GM12878 (cell line): ENCODE measurements at regions of chr7 and their contacts with region 1.

Region 1: GRCh38 chr7:87926581-87927461 is 7.2 kb upstream of the ADAM22 start:
- DNase-seq: peak; percentile 95
- ATAC-seq: peak; percentile 90
- H3K4me3 ChIP-seq: peak overlapping the region; percentile 62
- H3K27ac ChIP-seq: peak overlapping the region; percentile 92
- H3K4me1 ChIP-seq: peaks cover 9% of the 10 kb centered on the region
- H3K27me3 ChIP-seq: no peaks in the 10 kb centered on the region
- CTCF ChIP-seq: peak; percentile 36 to 48 (median 40)
- EP300 ChIP-seq: peak in 1 of 2 experiments; percentile 91; a peak in 3 of 4 replicates
- POLR2A ChIP-seq: peak; percentile 69
- RAD21 ChIP-seq: peak; percentile 10; the same call in 1 of the 2 replicates

Region 2: GRCh38 chr7:87038993-87039716 is 887.7 kb before region 1 on chr7:
- CTCF ChIA-PET with region 1: no interaction called
- POLR2A ChIA-PET with region 1: no interaction called
- RAD21 ChIA-PET with region 1: no interaction called
- SMC1A ChIA-PET with region 1: no interaction called
- in situ Hi-C with region 1: no loop called
- intact Hi-C with region 1: no loop called
- DNase-seq: no peak
- ATAC-seq: no peak
- H3K4me3 ChIP-seq: no peak overlapping the region
- H3K27ac ChIP-seq: no peak overlapping the region
- H3K4me1 ChIP-seq: no peaks in the 10 kb centered on the region
- H3K27me3 ChIP-seq: no peaks in the 10 kb centered on the region
- CTCF ChIP-seq: no peak
- EP300 ChIP-seq: no peak
- POLR2A ChIP-seq: no peak
- RAD21 ChIP-seq: no peak

Region 3: GRCh38 chr7:87219545-87220025 is 707.2 kb before region 1 on chr7 and contains the start of gene TMEM243:
- CTCF ChIA-PET with region 1: no interaction called
- POLR2A ChIA-PET with region 1: no interaction called
- RAD21 ChIA-PET with region 1: no interaction called
- SMC1A ChIA-PET with region 1: no interaction called
- in situ Hi-C with region 1: no loop called
- intact Hi-C with region 1: loop called (anchors 2 kb)
- DNase-seq: peak; percentile 45
- ATAC-seq: peak; percentile 69
- H3K4me3 ChIP-seq: peak within 1 kb of the TSS; percentile 95
- H3K27ac ChIP-seq: peak within 1 kb of the TSS; percentile 98
- H3K4me1 ChIP-seq: peaks cover 8% of the 10 kb centered on the region
- H3K27me3 ChIP-seq: no peaks in the 10 kb centered on the region
- CTCF ChIP-seq: peak; percentile 28 to 42 (median 34); a peak in 5 of 6 replicates
- EP300 ChIP-seq: peak in 1 of 2 experiments; percentile 73; a peak in 2 of 4 replicates
- POLR2A ChIP-seq: peak; percentile 90
- RAD21 ChIP-seq: peak; percentile 29; the same call in 1 of the 2 replicates
- polyA plus RNA-seq, gene TMEM243: 47.8 to 70.9 TPM

Region 4: DNA sequence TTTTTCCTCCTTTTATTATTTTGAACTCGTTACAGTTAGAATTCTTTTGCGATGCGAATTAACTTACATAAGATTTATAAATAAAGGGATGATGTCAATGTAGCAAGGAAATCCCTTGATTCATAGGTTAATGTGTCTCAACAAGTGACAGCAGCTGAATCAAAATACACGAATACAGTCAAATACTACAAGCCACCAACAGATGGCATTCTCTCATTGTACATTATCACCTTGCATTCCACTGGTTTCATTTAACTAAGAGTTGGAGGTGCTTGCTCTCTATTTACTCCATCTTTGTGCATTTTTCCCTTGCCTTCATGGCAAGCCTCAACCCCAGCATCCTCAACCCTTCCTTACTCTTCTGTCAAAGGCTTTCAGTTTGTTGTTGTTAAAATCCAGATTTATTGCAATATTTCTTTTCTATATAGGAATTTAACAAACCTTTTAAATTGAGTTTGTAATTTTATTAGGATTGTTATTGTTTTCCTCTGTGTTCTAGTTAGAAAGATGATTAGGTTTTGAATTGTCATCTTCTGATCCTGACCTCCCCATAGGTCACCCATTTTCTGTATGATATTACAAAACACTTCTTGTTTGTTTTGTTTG is 128.9 kb before region 1 on chr7:
- CTCF ChIA-PET with region 1: interaction called, 7 read pairs
- POLR2A ChIA-PET with region 1: no interaction called
- RAD21 ChIA-PET with region 1: interaction called, 10 read pairs
- SMC1A ChIA-PET with region 1: interaction called, 6 read pairs
- in situ Hi-C with region 1: no loop called
- intact Hi-C with region 1: no loop called
- DNase-seq: peak; percentile 45
- ATAC-seq: peak; percentile 96
- H3K4me3 ChIP-seq: no peak overlapping the region
- H3K27ac ChIP-seq: no peak overlapping the region
- H3K4me1 ChIP-seq: no peaks in the 10 kb centered on the region
- H3K27me3 ChIP-seq: no peaks in the 10 kb centered on the region
- CTCF ChIP-seq: peak; percentile 56 to 81 (median 59); a peak in 4 of 6 replicates
- EP300 ChIP-seq: no peak
- POLR2A ChIP-seq: no peak
- RAD21 ChIP-seq: peak; percentile 89

Region 5: DNA sequence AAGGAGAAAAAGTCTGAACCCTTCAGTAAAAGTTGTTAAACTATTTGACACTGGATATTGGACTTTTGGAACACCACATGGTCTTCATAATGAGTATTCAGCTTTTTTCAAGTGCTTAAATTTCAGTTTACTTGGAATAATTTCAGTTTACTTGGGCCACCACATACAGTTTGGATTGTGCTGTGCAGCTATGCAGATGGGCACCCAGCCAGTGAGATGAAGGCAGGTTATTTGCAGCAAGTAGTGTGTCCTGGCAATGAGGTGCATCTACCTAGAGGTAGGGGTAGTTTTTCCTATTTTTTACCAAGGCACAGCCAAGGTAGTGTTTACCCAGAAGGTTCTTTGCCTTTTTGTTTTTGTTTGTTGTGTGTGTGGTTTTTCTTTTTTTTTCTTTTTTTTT is 16.7 kb before region 1 on chr7:
- CTCF ChIA-PET with region 1: interaction called, 7 read pairs
- POLR2A ChIA-PET with region 1: interaction called, 11 read pairs
- RAD21 ChIA-PET with region 1: interaction called, 4 read pairs
- SMC1A ChIA-PET with region 1: interaction called, 10 read pairs
- in situ Hi-C with region 1: no loop called
- intact Hi-C with region 1: no loop called
- DNase-seq: no peak
- ATAC-seq: peak; percentile 39; the same call in 2 of the 3 replicates
- H3K4me3 ChIP-seq: no peak overlapping the region
- H3K27ac ChIP-seq: no peak overlapping the region
- H3K4me1 ChIP-seq: no peaks in the 10 kb centered on the region
- H3K27me3 ChIP-seq: no peaks in the 10 kb centered on the region
- CTCF ChIP-seq: no peak
- EP300 ChIP-seq: no peak
- POLR2A ChIP-seq: 0 out of 2 replicates have a peak, but pooled peaks have one; percentile 9
- RAD21 ChIP-seq: no peak

Region 6: GRCh38 chr7:88040694-88041093 is 113.9 kb after region 1 on chr7:
- CTCF ChIA-PET with region 1: interaction called, 4 read pairs
- POLR2A ChIA-PET with region 1: interaction called, 3 read pairs
- RAD21 ChIA-PET with region 1: interaction called, 11 read pairs
- SMC1A ChIA-PET with region 1: interaction called, 8 read pairs
- in situ Hi-C with region 1: no loop called
- intact Hi-C with region 1: loop called (anchors 5 kb)
- DNase-seq: no peak
- ATAC-seq: peak; percentile 49
- H3K4me3 ChIP-seq: no peak overlapping the region
- H3K27ac ChIP-seq: no peak overlapping the region
- H3K4me1 ChIP-seq: peaks cover 5% of the 10 kb centered on the region
- H3K27me3 ChIP-seq: no peaks in the 10 kb centered on the region
- CTCF ChIP-seq: no peak
- EP300 ChIP-seq: no peak
- POLR2A ChIP-seq: no peak
- RAD21 ChIP-seq: no peak

Region 7: DNA sequence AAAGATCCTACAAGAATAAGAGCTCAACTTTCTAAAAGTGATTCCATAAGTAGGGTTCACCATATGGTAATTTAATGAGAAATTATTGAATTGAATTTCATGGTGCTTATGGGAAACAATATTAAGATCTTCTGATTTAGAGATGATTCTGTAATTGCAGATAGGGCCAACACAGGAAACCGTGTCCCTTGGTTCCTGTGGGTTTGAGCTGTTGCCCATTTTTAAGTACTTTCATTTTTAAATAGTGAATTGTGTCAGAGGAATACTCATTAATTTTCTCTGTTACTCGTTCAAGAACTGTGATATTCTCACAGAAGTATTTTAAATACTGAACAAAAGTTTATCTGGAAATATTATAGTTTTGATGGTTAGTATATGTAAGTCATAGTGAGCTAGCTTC is 163.8 kb after region 1 on chr7:
- CTCF ChIA-PET with region 1: interaction called, 7 read pairs
- POLR2A ChIA-PET with region 1: interaction called, 3 read pairs
- RAD21 ChIA-PET with region 1: interaction called, 18 read pairs
- SMC1A ChIA-PET with region 1: interaction called, 6 read pairs
- in situ Hi-C with region 1: no loop called
- intact Hi-C with region 1: no loop called
- DNase-seq: no peak
- ATAC-seq: peak; percentile 87
- H3K4me3 ChIP-seq: no peak overlapping the region
- H3K27ac ChIP-seq: no peak overlapping the region
- H3K4me1 ChIP-seq: no peaks in the 10 kb centered on the region; the same call in 1 of the 2 replicates
- H3K27me3 ChIP-seq: no peaks in the 10 kb centered on the region
- CTCF ChIP-seq: no peak
- EP300 ChIP-seq: no peak
- POLR2A ChIP-seq: no peak
- RAD21 ChIP-seq: no peak

Region 8: GRCh38 chr7:88219781-88220747 is 293.2 kb after region 1 on chr7 and contains the start of gene SRI:
- CTCF ChIA-PET with region 1: interaction called, 8 read pairs
- POLR2A ChIA-PET with region 1: interaction called, 3 read pairs
- RAD21 ChIA-PET with region 1: interaction called, 4 read pairs
- SMC1A ChIA-PET with region 1: interaction called, 7 read pairs
- in situ Hi-C with region 1: no loop called
- intact Hi-C with region 1: loop called (anchors 5 kb)
- DNase-seq: peak; percentile 40
- ATAC-seq: peak; percentile 83
- H3K4me3 ChIP-seq: peak within 1 kb of the TSS; percentile 80
- H3K27ac ChIP-seq: peak within 1 kb of the TSS; percentile 74
- H3K4me1 ChIP-seq: no peaks in the 10 kb centered on the region
- H3K27me3 ChIP-seq: no peaks in the 10 kb centered on the region
- CTCF ChIP-seq: peak; percentile 43 to 73 (median 70); a peak in 5 of 6 replicates
- EP300 ChIP-seq: no peak
- POLR2A ChIP-seq: peak; percentile 95
- RAD21 ChIP-seq: no peak
- polyA plus RNA-seq, gene SRI: 174 to 259 TPM